Posterior vena cava (tissue), 2 donors: ENCODE measurements at regions of chr6 and their contacts with region 1.

Region 1: DNA sequence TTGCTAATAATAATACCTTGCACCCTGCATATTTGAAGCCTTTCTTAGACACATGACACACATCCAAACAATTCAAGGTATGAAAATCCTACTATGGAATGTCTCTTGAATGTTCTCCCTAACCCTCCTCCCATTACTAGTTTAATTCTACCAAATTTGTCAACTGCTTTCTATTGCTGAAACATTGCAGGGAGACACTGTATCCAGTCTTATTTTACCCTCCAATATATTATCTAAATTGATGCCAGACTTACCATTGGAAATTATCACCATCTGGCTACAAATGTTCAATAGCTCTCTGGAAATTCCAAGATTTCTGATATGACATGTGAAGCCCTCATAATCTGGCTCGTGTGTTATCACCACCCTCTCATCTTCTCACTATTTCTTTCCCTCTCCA is 1027.3 kb upstream of the CITED2 start:
- DNase-seq: no peak

Region 2: GRCh38 chr6:140193269-140193668 is 208.5 kb before region 1 on chr6:
- intact Hi-C with region 1: no loop called
- DNase-seq: no peak

Region 3: DNA sequence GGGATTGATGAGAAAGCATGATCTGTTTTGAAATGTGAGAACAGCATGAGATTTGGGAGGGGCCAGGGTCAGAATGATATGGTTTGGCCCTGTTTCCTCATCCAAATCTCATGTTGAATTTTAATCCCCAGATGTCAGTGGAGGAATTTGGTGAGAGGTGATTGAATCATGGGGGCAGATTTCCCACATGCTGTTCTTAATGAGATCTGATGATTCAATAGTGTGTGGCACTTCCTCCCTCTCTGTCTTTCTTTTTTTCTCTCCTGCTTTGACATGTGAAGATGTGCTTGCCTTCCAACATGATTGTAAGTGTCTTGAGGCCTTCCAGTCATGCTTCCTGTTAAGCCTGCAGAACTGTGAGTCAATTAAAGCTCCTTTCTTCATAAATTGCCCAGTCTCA is 33.0 kb after region 1 on chr6:
- intact Hi-C with region 1: loop called in 1 of 2 experiments (anchors 1 kb)
- DNase-seq: no peak

Region 4: GRCh38 chr6:140446241-140446640 is 44.5 kb after region 1 on chr6:
- intact Hi-C with region 1: no loop called
- DNase-seq: no peak